GM13976 (cell line): ENCODE measurements at regions of chr1 and their contacts with region 1.

Region 1: GRCh38 chr1:246002725-246003441 is 504.2 kb downstream of the SMYD3 start:
- DNase-seq: peak; percentile 79
- CTCF ChIP-seq: peak; percentile 78

Region 2: GRCh38 chr1:245156081-245156735 is 846.7 kb before region 1 on chr1:
- in situ Hi-C with region 1: loop called (anchors 10 kb)
- DNase-seq: peak; percentile 96
- CTCF ChIP-seq: peak; percentile 86

Region 3: GRCh38 chr1:246280551-246280950 is 277.7 kb after region 1 on chr1:
- in situ Hi-C with region 1: loop called (anchors 25 kb)
- DNase-seq: peak; percentile 16
- CTCF ChIP-seq: peak; percentile 17